HEK293 (cell line): ENCODE measurements at regions of chr19 and their contacts with region 1.

Region 1: DNA sequence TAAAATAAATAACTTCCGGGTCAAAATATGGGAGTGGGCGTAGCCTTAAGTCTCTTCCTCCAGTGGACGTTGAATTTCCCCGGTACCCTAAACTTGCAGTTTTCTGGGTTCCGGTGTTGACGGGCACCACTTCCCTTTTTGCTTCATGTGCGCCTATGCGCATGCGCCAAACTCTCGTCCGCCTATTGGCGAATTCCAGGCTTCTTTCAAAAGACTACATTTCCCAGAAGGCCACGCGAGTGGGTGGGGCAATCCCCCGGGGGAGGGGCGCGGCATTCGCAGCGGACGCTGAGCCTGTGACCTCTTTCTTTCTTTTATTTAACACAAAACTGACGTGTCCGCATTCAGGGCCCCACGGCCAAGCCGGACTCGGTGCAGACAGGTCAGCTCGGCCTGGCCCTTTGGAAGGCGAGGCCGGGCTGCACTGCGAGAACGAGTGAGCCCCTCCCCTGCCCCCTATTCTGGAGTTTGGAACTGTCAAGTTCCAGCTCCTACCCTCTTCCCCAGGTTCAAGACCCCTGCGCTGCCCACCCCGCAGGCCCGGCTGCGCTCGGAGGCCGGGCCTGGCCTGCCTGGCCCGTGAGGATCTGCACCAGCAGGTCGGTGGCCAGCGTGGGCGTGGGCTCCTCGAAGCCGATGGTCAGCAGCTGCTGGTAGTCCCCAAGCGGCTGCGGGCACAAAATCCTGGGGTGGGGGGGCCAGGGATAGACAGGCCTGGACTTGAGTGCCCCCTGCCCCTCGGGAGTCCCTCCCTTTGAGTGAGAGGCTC is 4.1 kb downstream of the C19orf67 start:
- H3K4me3 ChIP-seq: peak overlapping the region; percentile 73
- H3K27ac ChIP-seq: no peak overlapping the region; the same call in 1 of the 2 replicates
- H3K4me1 ChIP-seq: no peaks in the 10 kb centered on the region; the same call in 1 of the 2 replicates
- CTCF ChIP-seq: 0 out of 2 replicates have a peak, but pooled peaks have one; percentile 12

Region 2: DNA sequence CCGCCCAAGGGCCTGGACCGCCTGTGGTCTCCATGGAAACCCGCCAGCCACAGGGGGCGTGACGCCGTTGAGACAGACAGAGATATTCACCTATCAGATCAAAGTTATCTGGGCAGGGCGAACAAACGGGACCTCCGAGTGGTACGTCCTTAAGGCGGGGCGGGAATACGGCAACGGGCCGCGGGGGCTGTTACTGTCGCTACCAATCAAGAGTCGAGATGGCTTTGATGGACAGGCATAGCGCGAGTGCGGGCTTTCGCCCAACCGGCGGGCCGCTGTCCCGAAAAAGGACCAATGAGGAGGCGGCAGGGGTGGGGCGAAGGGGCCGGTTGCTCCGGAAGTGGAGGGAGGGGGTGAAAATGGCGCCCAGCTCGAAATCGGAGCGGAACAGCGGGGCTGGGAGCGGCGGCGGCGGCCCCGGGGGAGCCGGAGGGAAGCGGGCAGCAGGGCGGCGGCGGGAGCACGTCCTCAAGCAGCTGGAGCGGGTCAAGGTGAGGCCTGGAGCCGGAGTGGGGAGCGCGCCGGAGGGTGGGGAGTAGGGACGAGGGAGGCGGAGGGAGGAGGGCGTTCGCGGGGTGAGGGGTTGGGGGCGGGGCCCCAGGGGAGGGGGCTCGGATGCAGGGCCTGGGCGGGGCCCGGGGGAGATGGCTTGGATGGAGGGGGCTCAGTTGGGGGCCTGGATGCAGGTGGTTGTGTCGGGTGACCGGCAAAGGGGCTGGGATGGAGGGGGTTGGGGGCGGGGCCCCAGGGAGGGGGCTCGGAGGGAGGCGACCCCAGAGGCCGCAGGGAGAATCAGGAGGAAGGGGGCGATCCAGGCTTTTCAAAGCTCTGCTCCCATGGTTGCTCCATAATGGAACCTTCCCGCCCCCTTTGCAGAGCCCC is 129.1 kb before region 1 on chr19 and contains the start of gene DCAF15:
- CTCF ChIA-PET with region 1: interaction called, 10 read pairs
- POLR2A ChIA-PET with region 1: no interaction called
- H3K4me3 ChIP-seq: peak within 1 kb of the TSS; percentile 92
- H3K27ac ChIP-seq: peak within 1 kb of the TSS; percentile 82
- H3K4me1 ChIP-seq: no peaks in the 10 kb centered on the region
- CTCF ChIP-seq: no peak